Activated CD8-positive, alpha-beta memory T cell treated with anti-CD3 and anti-CD28 coated beads, Interleukin-2, amount 10 ng/mL, durations not matched to agents 7 days and 5 days (primary cell): ENCODE measurements at regions of chr17 and their contacts with region 1.

Region 1: DNA sequence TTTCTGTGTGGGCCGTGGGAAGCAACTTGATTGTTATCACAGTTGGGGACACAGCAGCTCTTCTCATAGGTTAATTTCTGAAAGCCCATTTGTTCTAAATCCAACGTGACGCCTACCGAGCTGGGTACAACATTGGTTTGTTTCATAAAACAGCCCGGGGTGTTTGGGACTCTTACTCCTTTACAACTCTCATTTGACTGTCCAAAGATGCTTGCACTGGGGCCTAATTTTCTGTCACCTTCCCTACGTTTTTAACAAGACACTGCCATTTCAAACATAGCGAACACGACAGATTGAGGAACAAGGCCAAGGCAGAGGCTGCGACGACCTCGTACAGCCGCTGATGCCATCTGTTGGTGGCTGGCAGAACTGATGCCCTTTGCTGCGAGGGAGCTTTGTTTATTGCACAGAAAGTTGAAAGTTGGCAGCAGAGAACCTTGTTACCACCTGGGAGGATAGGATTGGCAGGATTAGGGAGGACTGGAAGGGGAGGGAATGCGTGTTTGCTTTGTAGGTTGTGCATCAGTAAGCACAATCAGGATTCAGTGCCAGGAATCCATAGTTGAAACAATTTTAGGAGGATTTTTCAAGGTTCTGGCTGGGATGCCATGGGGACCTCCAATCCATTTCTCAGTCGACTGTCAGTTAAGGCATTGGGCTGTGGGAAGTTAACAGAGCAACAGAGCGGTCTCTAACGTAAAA is 98.3 kb downstream of the PITPNC1 start:
- DNase-seq: peak; percentile 92
- ATAC-seq: peak; percentile 84
- H3K4me3 Mint-ChIP-seq: peak overlapping the region; percentile 64
- H3K27ac Mint-ChIP-seq: peak overlapping the region; percentile 93
- H3K4me1 Mint-ChIP-seq: peaks cover 68% of the 10 kb centered on the region
- H3K27me3 Mint-ChIP-seq: no peaks in the 10 kb centered on the region

Region 2: DNA sequence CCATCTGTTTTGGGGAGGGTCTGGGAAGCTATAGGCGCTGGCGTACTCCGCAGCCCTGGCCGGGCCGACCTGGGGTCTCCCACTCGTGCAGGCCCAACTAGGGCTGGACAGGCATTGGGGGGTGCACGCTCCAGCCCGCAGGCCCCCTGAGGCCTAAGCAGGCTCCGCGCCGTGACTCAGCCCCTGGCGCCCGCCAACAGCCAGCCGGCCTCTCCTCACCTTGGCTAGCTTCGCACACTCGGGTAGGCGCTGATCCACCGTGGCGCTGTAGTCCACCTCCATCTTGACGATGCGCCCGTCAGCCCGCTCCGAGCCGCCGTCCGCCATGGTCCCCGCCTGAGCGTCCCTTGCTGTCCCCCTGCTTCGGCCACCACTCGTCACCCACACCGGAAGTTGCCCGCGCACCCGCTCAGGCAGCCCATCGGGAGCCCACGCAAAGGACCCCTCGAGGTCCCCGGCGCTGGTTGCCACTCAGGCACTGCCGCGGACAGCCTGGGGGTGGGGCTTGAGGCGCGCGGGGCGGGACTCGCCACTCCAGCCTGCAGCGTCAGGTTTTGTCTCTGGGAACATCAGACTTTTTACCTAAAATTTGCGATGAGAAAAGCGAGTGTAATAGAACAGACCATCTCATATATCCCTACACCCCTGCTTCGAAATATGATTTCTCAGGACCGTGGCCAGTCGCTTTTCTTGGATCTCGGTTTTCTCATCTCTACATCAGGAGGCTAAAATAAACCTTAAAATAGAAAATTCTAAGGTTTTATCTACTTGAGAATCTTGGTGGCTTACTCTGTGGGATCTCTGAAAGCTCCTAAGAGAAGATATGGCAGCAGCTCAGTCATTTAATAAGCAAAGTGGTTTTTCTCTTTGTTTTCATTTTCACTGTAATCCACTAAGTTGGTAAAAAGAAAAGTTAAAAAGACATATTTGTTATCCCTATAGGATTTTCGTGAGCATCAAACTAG is 108.9 kb before region 1 on chr17 and contains the start of gene PSMD12:
- CTCF ChIA-PET with region 1: interaction called, 13 read pairs
- DNase-seq: peak; percentile 96
- ATAC-seq: peak; percentile 88
- H3K4me3 Mint-ChIP-seq: peak within 1 kb of the TSS; percentile 89
- H3K27ac Mint-ChIP-seq: peak within 1 kb of the TSS; percentile 89
- H3K4me1 Mint-ChIP-seq: peaks cover 52% of the 10 kb centered on the region
- H3K27me3 Mint-ChIP-seq: no peaks in the 10 kb centered on the region
- total RNA-seq, gene PSMD12: 52.8 to 63.2 TPM

Region 3: DNA sequence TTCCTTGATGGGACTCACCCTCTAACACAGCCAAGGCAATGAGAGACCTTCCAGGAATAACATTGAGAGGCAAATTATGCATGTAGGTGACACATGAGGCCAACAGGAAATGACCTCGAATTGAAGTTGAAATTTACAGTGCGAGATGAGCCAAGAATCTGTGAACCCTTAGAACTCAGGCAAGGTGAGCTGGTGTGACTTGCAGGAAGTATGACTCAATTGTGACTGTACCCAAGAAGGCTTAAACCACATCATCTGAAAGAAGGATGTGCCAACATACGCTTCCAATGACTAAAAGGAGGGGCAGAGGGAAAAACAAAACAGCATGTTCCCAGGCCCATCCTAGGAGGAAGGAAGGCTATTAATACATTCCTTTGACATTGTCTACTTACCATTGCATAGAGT is 53.5 kb before region 1 on chr17:
- CTCF ChIA-PET with region 1: interaction called, 13 read pairs
- DNase-seq: peak; percentile 77
- ATAC-seq: peak; percentile 98
- H3K4me3 Mint-ChIP-seq: no peak overlapping the region
- H3K27ac Mint-ChIP-seq: peak overlapping the region; percentile 77
- H3K4me1 Mint-ChIP-seq: peaks cover 57% of the 10 kb centered on the region
- H3K27me3 Mint-ChIP-seq: no peaks in the 10 kb centered on the region

Region 4: DNA sequence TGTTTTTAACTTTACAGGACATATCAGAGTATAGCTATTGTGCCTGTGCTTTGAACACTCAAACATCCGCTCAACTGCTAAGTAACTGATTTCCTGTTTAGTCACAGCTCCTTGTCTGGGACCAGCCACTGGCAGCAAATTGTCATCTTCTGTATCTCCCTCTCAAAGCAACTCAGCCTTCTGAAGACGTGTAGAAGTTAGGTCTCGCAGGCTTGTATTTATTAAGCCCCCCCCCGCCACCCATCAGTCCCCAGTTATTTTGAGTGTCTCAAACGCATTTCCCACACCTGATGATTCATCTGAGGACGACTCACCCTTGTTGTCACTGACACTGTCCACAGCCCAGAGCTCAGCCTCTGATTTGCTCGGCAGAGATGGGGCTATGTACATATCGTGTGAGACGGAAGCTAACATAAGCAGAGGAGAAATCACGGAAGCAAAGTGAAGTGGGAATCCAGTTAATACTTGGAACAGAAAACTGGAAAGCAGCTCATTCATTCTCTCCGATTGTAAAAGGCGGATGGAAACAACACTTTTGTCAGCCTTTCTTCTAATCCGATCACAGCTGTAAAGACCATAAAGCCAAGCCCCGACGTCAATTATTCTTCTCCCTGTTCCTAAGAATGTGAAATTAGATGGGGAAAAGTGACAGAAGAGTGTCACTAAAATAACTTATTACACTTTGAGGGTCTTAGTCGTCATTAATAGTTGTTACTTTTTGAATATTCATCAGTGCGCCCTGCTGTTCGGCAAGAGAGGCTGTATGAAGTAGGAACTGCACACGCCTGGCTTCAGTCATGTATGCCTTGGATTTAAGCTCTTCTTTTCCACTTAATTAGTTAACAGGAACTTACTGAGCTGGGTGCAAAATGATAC is 34.1 kb before region 1 on chr17:
- CTCF ChIA-PET with region 1: interaction called, 34 read pairs
- DNase-seq: peak; percentile 89
- ATAC-seq: peak; percentile 92
- H3K4me3 Mint-ChIP-seq: peak overlapping the region; percentile 73
- H3K27ac Mint-ChIP-seq: peak overlapping the region; percentile 99
- H3K4me1 Mint-ChIP-seq: peaks cover 55% of the 10 kb centered on the region
- H3K27me3 Mint-ChIP-seq: no peaks in the 10 kb centered on the region

Region 5: DNA sequence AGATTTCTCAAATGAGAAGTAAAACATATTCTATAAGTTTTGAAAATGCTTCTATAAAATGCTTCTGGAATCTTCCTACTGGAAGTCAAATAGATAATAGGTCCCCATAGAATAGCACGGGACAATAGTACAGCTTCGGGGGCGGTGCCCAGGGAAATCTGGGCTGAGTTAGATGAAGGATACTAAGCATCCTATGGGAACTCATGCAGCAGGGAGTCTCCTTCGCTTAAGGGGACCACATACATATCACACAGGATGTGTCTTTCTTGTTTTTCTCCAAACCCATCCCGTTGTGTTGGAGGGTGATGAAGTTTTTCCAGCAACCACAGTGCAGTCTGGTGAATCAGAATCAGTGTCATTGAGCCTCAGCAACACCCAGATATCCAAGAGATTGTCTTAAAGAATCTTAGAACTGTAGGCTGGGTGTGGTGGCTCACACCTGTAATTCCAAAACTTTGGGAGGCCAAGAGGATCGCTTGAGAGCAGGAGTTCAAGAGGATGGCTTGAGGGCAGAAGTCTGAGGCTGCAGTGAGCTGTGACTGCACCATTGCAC is 14.1 kb before region 1 on chr17:
- CTCF ChIA-PET with region 1: interaction called, 17 read pairs
- DNase-seq: no peak
- ATAC-seq: peak; percentile 49
- H3K4me3 Mint-ChIP-seq: no peak overlapping the region
- H3K27ac Mint-ChIP-seq: peak overlapping the region; percentile 18
- H3K4me1 Mint-ChIP-seq: peaks cover 47% of the 10 kb centered on the region
- H3K27me3 Mint-ChIP-seq: no peaks in the 10 kb centered on the region

Region 6: DNA sequence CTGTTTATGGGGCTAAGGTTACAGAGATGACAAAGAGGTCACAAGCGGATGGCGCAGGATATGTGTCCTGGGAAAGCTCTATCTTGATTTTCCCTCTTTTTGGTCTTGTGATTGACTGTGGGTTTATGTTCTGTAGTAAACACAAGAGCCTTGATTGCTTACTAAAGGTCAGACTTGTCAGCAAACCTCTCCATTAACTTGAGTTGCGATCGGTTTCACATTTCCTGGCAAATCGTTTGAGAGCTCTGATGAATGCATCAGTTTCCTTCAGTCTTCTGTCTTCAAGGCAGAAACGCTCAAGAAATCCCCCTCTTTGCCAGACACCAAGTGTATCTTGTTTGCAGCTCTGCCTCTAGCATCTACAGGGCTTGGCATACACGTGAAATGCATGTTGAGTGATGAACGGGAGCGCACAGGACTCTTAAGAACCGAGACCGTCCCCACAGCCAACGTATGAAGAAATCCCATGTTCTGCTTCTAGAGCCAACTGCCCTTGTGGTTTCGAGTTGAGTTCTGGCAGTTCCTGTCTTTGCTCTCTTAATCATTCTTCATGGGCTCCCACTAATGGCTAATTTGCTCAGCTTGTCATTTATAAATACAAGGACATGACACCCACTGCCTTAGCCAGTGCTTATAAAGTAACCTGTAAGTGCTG is 45.0 kb after region 1 on chr17:
- CTCF ChIA-PET with region 1: no interaction called
- DNase-seq: no peak
- ATAC-seq: no peak
- H3K4me3 Mint-ChIP-seq: no peak overlapping the region
- H3K27ac Mint-ChIP-seq: no peak overlapping the region
- H3K4me1 Mint-ChIP-seq: peaks cover 26% of the 10 kb centered on the region
- H3K27me3 Mint-ChIP-seq: no peaks in the 10 kb centered on the region

Region 7: GRCh38 chr17:67689534-67690177 is 214.3 kb after region 1 on chr17:
- CTCF ChIA-PET with region 1: interaction called, 12 read pairs
- DNase-seq: peak; percentile 56
- ATAC-seq: no peak
- H3K4me3 Mint-ChIP-seq: no peak overlapping the region
- H3K27ac Mint-ChIP-seq: no peak overlapping the region
- H3K4me1 Mint-ChIP-seq: peaks cover 4% of the 10 kb centered on the region
- H3K27me3 Mint-ChIP-seq: no peaks in the 10 kb centered on the region